Activated CD8-positive, alpha-beta T cell treated with anti-CD3 and anti-CD28 coated beads for 36 hours (primary cell): ENCODE measurements at regions of chr5 and their contacts with region 1.

Region 1: GRCh38 chr5:177431317-177432142 is 5.1 kb downstream of the GRK6 start:
- DNase-seq: peak; percentile 92
- ATAC-seq: peak; percentile 37
- H3K4me3 Mint-ChIP-seq: peak overlapping the region; percentile 97
- H3K27ac Mint-ChIP-seq: peak overlapping the region; percentile 98
- H3K4me1 Mint-ChIP-seq: peaks cover 57% of the 10 kb centered on the region
- H3K27me3 Mint-ChIP-seq: no peaks in the 10 kb centered on the region
- CTCF ChIP-seq: no peak

Region 2: GRCh38 chr5:177412603-177413233 is 18.8 kb before region 1 on chr5:
- CTCF ChIA-PET with region 1: interaction called, 159 read pairs
- POLR2A ChIA-PET with region 1: interaction called, 23 read pairs
- intact Hi-C with region 1: no loop called
- DNase-seq: peak; percentile 46
- ATAC-seq: peak; percentile 82
- H3K4me3 Mint-ChIP-seq: peak overlapping the region; percentile 18
- H3K27ac Mint-ChIP-seq: peak overlapping the region; percentile 70
- H3K4me1 Mint-ChIP-seq: peaks cover 40% of the 10 kb centered on the region
- H3K27me3 Mint-ChIP-seq: no peaks in the 10 kb centered on the region
- CTCF ChIP-seq: no peak

Region 3: DNA sequence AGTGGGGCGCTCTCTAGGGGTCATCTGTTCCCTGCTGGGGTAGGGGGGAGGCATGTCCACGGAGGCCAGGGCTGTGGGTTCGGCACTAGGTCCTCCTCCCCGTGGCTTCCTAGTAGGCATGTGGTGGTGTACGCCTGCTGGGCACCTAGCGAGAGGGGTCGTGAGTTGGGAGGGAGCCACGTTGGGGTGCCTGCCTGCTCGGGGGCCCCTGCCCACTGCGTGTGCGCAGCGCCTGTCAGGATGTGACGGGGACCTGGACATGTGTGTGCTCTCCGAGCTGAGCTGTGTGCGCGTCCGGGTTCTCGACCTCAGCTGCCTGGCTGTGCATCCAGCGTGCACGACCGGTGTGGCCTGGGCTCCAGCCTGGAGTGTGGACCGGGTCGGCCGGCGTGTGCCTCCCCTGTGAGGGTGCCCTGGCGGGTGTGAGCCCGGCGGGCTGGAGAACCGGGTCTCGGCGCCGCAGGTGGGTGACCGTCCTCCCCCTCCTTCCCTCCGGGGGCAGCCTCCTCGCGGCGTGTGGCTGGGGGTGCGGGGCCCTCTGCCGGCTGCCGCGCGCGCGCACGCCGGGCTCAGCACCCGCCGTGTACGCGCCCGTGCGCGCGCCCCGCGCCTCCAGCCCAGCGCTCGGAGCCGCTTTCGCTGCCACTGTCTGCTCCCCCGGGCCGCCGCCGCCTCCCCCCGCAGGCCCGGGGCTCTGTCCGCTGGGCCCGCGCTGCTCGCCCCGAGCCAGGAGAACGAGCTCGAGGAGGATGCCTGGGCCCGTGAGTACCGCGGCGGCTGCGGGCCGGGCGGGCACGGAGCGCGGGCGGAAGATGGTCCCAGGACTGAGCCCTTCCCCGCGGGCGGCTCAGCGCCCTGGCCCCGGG is 14.9 kb after region 1 on chr5 and contains the start of gene PRR7:
- CTCF ChIA-PET with region 1: interaction called, 71 read pairs
- POLR2A ChIA-PET with region 1: interaction called, 606 read pairs
- intact Hi-C with region 1: no loop called
- DNase-seq: peak; percentile 77
- ATAC-seq: peak; percentile 58
- H3K4me3 Mint-ChIP-seq: peak within 1 kb of the TSS; percentile 79
- H3K27ac Mint-ChIP-seq: peak within 1 kb of the TSS; percentile 80
- H3K4me1 Mint-ChIP-seq: peaks cover 43% of the 10 kb centered on the region
- H3K27me3 Mint-ChIP-seq: no peaks in the 10 kb centered on the region
- CTCF ChIP-seq: no peak
- total RNA-seq, gene PRR7: 32.6 to 36.4 TPM

Region 4: GRCh38 chr5:177473461-177474001 is 42.0 kb after region 1 on chr5 and contains the start of gene DBN1:
- CTCF ChIA-PET with region 1: interaction called, 3 read pairs
- POLR2A ChIA-PET with region 1: interaction called, 11 read pairs
- intact Hi-C with region 1: no loop called
- DNase-seq: peak; percentile 54
- ATAC-seq: peak; percentile 35
- H3K4me3 Mint-ChIP-seq: peak within 1 kb of the TSS; percentile 80
- H3K27ac Mint-ChIP-seq: peak within 1 kb of the TSS; percentile 82
- H3K4me1 Mint-ChIP-seq: peaks cover 60% of the 10 kb centered on the region
- H3K27me3 Mint-ChIP-seq: no peaks in the 10 kb centered on the region
- CTCF ChIP-seq: no peak
- total RNA-seq, gene DBN1: 101 to 105 TPM